ENCODE measurements at regions of chr9 and their contacts with region 1.

Region 1: DNA sequence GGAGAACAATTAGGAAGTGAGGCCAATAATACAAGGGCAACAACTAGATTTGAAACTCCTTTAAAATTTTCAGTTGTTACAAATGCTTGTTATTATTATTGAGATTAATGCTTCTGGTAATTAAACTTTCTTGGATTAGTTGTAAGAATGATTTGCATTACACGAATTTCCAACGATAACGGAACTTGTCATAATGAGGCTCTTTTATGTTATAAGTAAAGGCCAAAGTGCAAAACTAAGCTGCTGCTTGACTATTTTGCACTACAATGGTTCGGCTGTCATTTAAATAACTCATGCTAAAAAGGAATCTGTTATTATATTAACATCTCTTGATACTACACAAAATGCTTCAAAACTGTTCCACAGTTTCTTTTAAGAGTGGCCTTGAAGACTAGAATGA is 1007.1 kb downstream of the PTPRD start:
- DNase-seq: no peak
- H3K4me3 ChIP-seq: no peak overlapping the region
- H3K27ac ChIP-seq: no peak overlapping the region
- H3K4me1 ChIP-seq: no peaks in the 10 kb centered on the region
- H3K27me3 ChIP-seq: no peaks in the 10 kb centered on the region
- CTCF ChIP-seq: no peak
- POLR2A ChIP-seq: no peak

Region 2: DNA sequence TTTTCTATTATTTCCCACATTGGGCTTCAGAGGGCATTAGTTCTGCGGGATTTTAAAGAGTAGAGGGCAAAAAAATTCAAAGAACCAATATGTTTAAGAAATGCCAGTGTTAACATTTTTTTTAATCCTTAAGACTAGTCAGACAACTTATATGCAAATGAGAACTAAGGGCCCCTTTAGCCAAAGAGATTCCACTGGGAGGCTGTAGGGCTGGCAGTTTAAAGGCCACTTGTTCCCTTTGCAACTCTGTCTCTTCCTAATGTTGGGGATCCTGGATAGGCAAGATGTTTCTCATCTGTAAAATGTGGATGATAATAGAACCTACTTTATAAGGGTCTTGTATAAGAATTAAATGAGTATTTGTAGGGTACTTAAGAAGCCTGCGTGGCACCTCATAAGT is 388.7 kb before region 1 on chr9:
- intact Hi-C with region 1: no loop called
- DNase-seq: no peak
- H3K4me3 ChIP-seq: no peak overlapping the region
- H3K27ac ChIP-seq: no peak overlapping the region
- H3K4me1 ChIP-seq: no peaks in the 10 kb centered on the region
- H3K27me3 ChIP-seq: no peaks in the 10 kb centered on the region
- CTCF ChIP-seq: no peak
- POLR2A ChIP-seq: no peak

Region 3: GRCh38 chr9:9478741-9479140 is 126.9 kb before region 1 on chr9:
- intact Hi-C with region 1: no loop called
- DNase-seq: no peak
- H3K4me3 ChIP-seq: no peak overlapping the region
- H3K27ac ChIP-seq: no peak overlapping the region
- H3K4me1 ChIP-seq: no peaks in the 10 kb centered on the region
- H3K27me3 ChIP-seq: no peaks in the 10 kb centered on the region
- CTCF ChIP-seq: no peak
- POLR2A ChIP-seq: no peak

Region 4: DNA sequence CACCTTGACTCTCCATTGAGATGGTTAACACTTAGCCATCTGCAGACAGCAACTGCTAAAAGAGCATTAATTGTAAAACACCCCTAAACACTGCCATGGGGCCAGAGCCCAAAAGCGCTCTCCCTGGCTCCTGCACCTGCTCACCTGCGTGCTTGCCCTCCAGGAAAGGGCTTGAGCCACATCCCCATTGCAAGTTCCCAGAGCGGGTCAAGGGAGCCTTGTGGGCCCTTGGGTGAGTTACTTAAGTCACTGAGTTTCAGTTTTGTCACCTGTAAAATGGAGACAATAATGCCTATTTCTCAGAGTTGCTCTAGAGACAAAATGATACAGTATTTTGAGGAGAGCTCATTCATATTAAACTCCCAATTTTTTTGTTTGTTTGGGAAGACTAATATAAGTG is 39.3 kb after region 1 on chr9:
- intact Hi-C with region 1: no loop called
- DNase-seq: no peak
- H3K4me3 ChIP-seq: no peak overlapping the region
- H3K27ac ChIP-seq: no peak overlapping the region
- H3K4me1 ChIP-seq: no peaks in the 10 kb centered on the region
- H3K27me3 ChIP-seq: no peaks in the 10 kb centered on the region
- CTCF ChIP-seq: no peak
- POLR2A ChIP-seq: no peak

Region 5: DNA sequence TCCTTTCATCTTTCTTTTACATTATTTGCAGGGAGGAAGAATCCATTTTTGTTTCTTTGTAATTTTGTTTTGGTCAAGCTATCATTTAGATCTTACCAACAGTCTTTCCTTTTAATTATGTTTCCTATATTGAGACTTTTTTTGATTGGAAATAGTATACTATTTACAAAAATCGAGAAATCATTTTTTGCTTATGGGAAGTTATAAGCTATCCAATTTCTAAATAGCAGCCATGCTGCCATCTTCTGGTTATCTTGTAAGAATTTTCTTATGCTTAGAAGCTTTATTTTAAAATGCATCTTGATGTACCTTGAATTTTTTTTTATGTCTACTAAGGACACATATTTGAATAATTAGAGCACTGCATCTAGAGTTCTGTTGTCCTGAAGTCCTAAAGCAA is 185.9 kb after region 1 on chr9:
- intact Hi-C with region 1: loop called (anchors 2 kb)
- DNase-seq: no peak
- H3K4me3 ChIP-seq: no peak overlapping the region
- H3K27ac ChIP-seq: no peak overlapping the region
- H3K4me1 ChIP-seq: no peaks in the 10 kb centered on the region
- H3K27me3 ChIP-seq: no peaks in the 10 kb centered on the region
- CTCF ChIP-seq: no peak
- POLR2A ChIP-seq: no peak